HCT116 (cell line): ENCODE measurements at regions of chr6 and their contacts with region 1.

Region 1: DNA sequence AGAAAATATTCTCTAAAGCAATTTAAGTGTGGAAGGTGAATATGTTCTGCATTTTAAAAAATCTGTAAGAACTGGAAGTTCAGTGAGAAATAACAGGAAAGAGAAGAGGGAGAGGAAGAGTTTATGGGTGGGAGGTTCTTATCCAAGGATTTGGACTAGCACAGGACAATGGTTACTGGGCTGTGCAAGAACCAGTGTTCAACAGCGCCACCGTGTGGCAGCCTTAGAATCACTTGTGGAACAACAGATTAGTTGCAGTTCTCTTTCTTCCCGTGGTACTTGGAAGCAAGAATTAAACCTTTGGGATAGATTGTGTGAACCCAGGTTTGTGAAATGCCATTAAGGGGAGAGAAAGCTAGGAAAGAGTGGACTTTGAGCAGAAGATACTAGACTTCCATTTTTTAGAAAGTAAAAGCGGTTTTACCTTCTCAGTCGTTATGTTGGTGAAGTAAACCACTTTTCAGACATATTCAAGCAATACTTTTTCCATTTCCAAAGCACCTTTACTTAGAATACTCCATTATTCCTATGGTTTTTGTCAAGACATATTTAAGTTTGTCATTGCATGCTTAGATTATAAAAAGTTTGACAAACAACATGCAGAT is 436.7 kb downstream of the RNF144B start:
- DNase-seq: peak; percentile 74
- ATAC-seq: no peak
- H3K4me3 ChIP-seq: no peak overlapping the region
- H3K27ac ChIP-seq: no peak overlapping the region
- H3K4me1 ChIP-seq: no peaks in the 10 kb centered on the region
- H3K27me3 ChIP-seq: no peaks in the 10 kb centered on the region
- CTCF ChIP-seq: peak; percentile 33 to 87 (median 69); a peak in 5 of 6 replicates
- POLR2A ChIP-seq: no peak
- RAD21 ChIP-seq: peak; percentile 52

Region 2: DNA sequence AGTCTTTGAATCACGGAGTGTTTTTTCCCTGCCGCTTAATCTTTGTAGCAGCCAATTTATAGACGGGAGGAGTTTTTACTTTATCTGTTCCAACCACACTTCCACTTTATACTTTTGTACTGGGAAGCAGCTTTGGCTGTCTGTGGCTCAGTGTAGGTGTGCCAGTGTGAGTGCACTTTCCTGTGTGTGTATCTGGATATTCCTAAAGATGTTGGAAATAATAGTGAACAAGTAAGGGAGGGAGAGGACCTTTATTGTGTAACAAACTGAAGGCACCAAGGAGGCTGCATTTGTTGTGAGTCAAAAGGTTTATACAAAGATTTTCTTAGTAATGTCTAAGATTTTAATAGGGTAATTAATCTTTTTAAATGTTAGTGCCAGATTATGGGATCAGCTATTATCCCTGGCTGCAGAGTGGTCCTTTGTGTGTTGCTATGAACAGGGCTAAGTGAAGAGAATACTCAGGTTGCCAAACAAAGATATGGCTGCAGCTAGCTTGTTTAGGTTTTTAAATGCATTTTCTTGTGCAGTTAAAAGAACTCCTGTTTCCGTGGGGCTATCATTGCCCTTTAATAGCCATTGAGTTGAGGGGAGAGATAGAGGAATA is 210.5 kb before region 1 on chr6:
- CTCF ChIA-PET with region 1: no interaction called
- POLR2A ChIA-PET with region 1: no interaction called
- RAD21 ChIA-PET with region 1: no interaction called
- intact Hi-C with region 1: loop called (anchors 5 kb)
- DNase-seq: no peak
- ATAC-seq: no peak
- H3K4me3 ChIP-seq: no peak overlapping the region
- H3K27ac ChIP-seq: no peak overlapping the region
- H3K4me1 ChIP-seq: no peaks in the 10 kb centered on the region
- H3K27me3 ChIP-seq: no peaks in the 10 kb centered on the region
- CTCF ChIP-seq: no peak
- POLR2A ChIP-seq: no peak
- RAD21 ChIP-seq: no peak

Region 3: GRCh38 chr6:18629571-18629970 is 194.3 kb before region 1 on chr6:
- CTCF ChIA-PET with region 1: no interaction called
- POLR2A ChIA-PET with region 1: no interaction called
- RAD21 ChIA-PET with region 1: no interaction called
- intact Hi-C with region 1: no loop called
- DNase-seq: no peak
- ATAC-seq: no peak
- H3K4me3 ChIP-seq: no peak overlapping the region
- H3K27ac ChIP-seq: no peak overlapping the region
- H3K4me1 ChIP-seq: peaks cover 0 to 16% of the 10 kb centered on the region in 2 experiments
- H3K27me3 ChIP-seq: no peaks in the 10 kb centered on the region
- CTCF ChIP-seq: no peak
- POLR2A ChIP-seq: no peak
- RAD21 ChIP-seq: no peak